ENCODE measurements at regions of chr7 and their contacts with region 1.

Region 1: DNA sequence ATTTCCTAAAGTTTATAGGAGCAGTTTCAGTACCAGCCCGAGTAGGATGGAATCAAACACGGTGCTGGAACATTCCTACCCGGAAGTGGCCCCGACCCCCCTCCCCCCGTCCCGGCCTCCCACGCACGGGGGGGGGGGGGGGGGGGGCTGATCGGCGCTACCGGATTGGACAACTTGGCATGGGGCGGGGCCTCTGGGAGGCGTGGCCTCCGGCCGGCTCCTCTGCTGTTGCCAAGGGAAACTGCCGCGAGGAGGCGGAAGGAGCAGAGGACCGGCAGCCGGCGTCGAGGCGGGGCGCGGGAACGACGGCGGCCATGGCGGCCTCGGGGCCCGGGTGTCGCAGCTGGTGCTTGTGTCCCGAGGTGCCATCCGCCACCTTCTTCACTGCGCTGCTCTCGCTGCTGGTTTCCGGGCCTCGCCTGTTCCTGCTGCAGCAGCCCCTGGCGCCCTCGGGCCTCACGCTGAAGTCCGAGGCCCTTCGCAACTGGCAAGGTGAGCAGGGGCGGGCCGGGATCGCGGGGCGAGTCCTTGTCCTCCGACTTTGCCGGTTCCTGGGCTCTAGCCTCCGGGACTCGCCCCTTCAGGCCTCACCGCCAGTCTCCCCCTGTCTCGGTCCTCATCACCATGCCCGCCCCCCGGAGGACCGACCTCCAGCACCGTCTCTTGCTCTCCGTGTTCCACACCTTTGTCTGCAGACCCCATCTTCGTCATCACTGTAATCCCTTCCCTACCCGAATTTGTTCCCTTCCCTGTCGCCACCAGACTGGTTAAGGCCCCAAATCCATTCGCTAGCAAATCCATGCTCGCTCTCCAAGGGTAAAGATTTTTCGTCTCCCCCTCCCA is at the start of gene RHBDD2:
- DNase-seq: peak; percentile 96 to 98 (median 98)
- H3K4me3 ChIP-seq: peak within 1 kb of the TSS; percentile 68
- H3K27ac ChIP-seq: peak within 1 kb of the TSS; percentile 74 to 80
- H3K4me1 ChIP-seq: peaks cover 6% of the 10 kb centered on the region
- H3K27me3 ChIP-seq: no peaks in the 10 kb centered on the region
- CTCF ChIP-seq: peak in 2 of 3 donors; percentile 42 to 49
- EP300 ChIP-seq: no peak
- POLR2A ChIP-seq: peak; percentile 96
- total RNA-seq, gene RHBDD2: 26.6 to 83.2 (median 68.5) TPM

Region 2: DNA sequence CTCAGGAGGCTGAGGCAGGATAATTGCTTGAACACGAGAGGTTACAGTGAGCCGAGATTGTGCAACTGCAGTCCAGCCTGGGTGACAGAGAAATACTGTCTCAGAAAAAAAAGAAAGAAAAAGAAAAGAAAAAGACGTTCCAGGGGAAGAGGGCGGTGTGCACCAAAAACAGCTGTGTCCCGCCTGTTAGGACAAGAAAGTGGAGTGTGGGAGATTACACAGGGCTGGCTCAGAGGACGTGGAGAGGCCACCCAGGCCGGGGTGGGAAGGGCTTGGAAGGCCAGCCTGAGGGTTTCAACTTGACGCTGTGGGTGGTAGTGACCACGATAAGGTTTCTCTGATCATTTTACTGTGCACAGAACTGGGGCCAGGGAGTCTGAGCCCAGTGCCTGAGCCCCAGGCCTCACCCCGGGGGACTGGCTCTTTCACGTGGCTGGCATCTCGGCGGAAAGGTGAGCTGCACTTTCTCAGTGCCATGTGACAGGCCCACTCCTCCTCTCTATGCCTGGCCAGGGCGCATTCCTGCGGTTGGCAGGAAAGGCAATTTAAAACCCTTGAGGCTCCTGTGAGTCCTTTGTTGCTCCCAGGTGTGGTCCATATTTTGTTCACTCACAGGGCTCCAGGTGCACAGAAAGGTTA is 13.8 kb after region 1 on chr7:
- intact Hi-C with region 1: no loop called
- DNase-seq: peak; percentile 53 to 74 (median 70)
- H3K4me3 ChIP-seq: no peak overlapping the region
- H3K27ac ChIP-seq: no peak overlapping the region
- H3K4me1 ChIP-seq: peaks cover 19% of the 10 kb centered on the region
- H3K27me3 ChIP-seq: no peaks in the 10 kb centered on the region
- CTCF ChIP-seq: no peak
- EP300 ChIP-seq: no peak
- POLR2A ChIP-seq: no peak

Region 3: DNA sequence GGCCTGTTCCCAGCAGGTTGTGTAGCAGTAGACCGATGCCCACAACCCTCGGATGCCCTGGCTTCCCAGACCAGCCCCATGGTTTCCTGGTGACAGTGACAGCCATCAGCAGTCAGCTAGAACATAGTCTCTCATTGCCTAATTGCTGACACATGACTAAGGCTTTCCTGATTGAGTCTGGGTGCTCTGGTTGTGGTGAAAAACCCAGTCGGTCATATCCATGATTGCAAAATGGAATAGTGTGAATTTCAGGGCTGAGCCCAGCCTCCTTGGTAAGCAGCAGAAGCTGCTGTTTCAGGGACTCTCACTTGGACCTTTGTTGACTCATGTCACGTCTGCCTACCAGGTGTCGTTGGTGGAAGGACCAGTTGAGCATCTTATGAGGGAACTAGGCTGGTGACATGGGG is 72.5 kb after region 1 on chr7:
- intact Hi-C with region 1: no loop called
- DNase-seq: no peak
- H3K4me3 ChIP-seq: no peak overlapping the region
- H3K27ac ChIP-seq: no peak overlapping the region
- H3K4me1 ChIP-seq: peaks cover 6% of the 10 kb centered on the region
- H3K27me3 ChIP-seq: no peaks in the 10 kb centered on the region
- CTCF ChIP-seq: no peak
- EP300 ChIP-seq: no peak
- POLR2A ChIP-seq: no peak

Region 4: GRCh38 chr7:75994388-75995051 is 115.5 kb after region 1 on chr7 and contains the start of gene TMEM120A:
- intact Hi-C with region 1: loop called in 1 of 4 experiments (anchors 10 kb)
- DNase-seq: peak; percentile 97 to 99 (median 97)
- H3K4me3 ChIP-seq: peak within 1 kb of the TSS; percentile 58
- H3K27ac ChIP-seq: peak within 1 kb of the TSS; percentile 92 to 94
- H3K4me1 ChIP-seq: peaks cover 20% of the 10 kb centered on the region
- H3K27me3 ChIP-seq: no peaks in the 10 kb centered on the region
- CTCF ChIP-seq: peak; percentile 18 to 47 (median 28)
- EP300 ChIP-seq: peak; percentile 27
- POLR2A ChIP-seq: peak; percentile 79
- total RNA-seq, gene TMEM120A: 44.4 to 140 (median 89.5) TPM

Region 5: DNA sequence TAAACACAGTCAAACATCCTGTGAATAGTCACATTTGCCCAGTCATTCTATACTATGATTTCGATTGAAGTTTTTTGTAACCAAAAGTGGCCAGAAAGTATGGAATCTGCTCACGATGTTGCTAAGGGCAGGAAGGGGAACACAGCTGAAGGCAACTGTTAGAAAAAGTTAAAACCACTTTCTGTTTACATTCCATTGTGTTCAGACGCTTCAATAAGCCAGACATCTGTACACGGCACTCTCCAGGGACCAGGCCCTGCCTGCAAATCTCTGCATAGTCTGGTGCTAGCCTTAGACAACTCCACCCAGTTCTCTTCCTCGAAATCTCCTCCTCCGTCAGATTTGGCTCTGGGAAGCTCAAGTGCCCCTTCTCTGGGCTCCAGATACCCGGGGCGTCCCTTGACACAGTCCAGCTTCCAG is 132.5 kb after region 1 on chr7:
- intact Hi-C with region 1: loop called in 2 of 4 experiments (anchors 5 to 10 kb)
- DNase-seq: peak; percentile 48 to 77 (median 58)
- H3K4me3 ChIP-seq: no peak overlapping the region
- H3K27ac ChIP-seq: peak overlapping the region in 1 of 2 donors; percentile 46
- H3K4me1 ChIP-seq: peaks cover 22% of the 10 kb centered on the region
- H3K27me3 ChIP-seq: no peaks in the 10 kb centered on the region
- CTCF ChIP-seq: no peak
- EP300 ChIP-seq: no peak
- POLR2A ChIP-seq: no peak

Measured in ovary (tissue), 10 donors.